ENCODE measurements at regions of chr16 and their contacts with region 1.

Region 1: DNA sequence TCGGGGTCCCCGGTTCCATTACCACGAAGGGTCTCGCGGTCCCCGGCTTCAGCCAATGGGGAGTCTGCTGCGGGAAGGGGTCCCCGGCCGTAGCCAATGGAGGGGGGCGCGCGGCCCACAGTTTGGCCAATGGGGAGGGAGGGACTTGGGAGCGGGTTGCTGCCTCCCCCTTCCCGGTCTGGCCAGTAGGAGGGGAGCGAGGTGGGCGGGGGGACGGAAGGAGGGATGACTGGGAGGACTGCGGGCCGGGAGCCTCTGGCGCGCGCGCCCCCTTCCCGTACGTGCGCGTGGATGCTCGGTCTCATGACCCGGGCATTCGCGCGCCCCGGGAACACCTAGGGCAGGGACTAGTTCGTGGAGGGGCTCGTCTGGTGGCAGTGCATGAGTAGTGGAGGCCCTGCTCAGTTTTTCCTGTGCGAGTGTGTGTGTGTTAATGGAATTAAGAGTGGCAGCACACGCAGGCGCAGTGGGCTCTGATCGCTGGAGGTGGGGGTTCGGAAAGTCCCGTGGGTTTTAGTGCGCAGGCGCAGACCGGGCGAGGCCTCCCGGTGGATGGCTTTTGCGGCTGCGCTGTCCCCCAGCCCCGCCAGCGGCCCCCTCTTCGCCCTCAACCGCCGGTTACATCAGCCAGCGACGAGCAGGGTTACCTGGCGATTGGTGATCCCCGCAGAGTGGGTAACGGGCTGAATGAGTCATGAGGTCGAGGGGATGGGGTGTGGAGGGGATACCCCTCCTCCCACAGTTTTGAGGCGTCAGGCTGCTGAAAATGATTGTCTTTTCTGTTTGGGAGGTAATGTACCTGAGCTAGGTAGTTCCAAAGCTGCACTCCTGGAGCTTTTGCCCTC is 1.3 kb downstream of the ATXN2L start:
- DNase-seq: peak; percentile 98
- H3K4me3 ChIP-seq: peak overlapping the region; percentile 74 to 100
- H3K27ac ChIP-seq: peak overlapping the region; percentile 95 to 99
- H3K4me1 ChIP-seq: peaks cover 25% of the 10 kb centered on the region
- H3K27me3 ChIP-seq: no peaks in the 10 kb centered on the region
- CTCF ChIP-seq: peak in 2 of 3 experiments; percentile 28 to 33
- POLR2A ChIP-seq: no peak

Region 2: DNA sequence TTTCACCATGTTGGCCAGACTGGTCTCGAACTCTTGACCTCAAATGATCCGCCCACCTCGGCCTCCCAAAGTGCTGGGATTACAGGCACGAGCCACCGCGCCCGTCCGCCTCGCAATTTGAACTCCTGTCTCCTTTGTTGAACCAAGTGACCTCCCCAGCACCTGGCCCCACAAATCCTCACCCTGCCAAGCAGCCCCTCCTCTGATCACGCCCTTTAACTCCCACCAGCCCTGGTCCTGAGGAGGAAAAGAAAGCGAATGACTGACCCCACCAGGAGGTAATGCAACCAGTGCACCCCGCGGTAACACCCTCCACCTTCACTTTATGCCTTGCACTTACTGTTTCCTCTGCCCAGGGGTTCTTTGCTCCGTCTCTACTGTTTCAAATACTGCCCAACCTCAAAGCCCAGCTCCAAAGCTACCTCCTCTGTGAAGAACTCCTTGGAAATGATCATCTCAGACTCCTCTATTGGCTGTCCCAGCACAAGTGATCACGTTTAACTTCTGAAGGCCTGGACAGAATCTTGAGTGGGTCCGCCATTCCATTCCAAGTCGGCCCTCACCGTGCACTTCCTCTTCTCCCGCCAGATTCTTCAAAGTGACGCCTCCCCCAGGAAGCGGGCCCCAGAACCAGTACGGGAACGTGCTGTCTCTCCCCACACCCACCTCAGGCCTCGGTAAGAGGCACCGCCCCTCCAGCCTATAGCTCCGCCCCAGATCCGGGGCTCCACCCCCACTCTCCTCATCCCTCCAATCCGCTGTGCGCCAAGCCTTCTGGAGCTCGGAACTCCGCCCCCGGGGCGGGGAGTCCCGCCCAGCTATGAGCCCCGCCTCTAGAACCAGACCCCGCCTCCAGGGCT is 112.1 kb after region 1 on chr16:
- intact Hi-C with region 1: no loop called
- DNase-seq: peak; percentile 87
- H3K4me3 ChIP-seq: peak overlapping the region; percentile 24 to 38
- H3K27ac ChIP-seq: no peak overlapping the region
- H3K4me1 ChIP-seq: no peaks in the 10 kb centered on the region
- H3K27me3 ChIP-seq: no peaks in the 10 kb centered on the region
- CTCF ChIP-seq: no peak
- POLR2A ChIP-seq: no peak

Region 3: GRCh38 chr16:28946681-28947080 is 122.6 kb after region 1 on chr16:
- intact Hi-C with region 1: loop called (anchors 5 kb)
- DNase-seq: no peak
- H3K4me3 ChIP-seq: no peak overlapping the region
- H3K27ac ChIP-seq: no peak overlapping the region
- H3K4me1 ChIP-seq: peaks cover 2% of the 10 kb centered on the region
- H3K27me3 ChIP-seq: no peaks in the 10 kb centered on the region
- CTCF ChIP-seq: no peak
- POLR2A ChIP-seq: no peak

Measured in testis (tissue), 5 donors.